Natural killer cell (primary cell): ENCODE measurements at regions of chr14 and their contacts with region 1.

Region 1: DNA sequence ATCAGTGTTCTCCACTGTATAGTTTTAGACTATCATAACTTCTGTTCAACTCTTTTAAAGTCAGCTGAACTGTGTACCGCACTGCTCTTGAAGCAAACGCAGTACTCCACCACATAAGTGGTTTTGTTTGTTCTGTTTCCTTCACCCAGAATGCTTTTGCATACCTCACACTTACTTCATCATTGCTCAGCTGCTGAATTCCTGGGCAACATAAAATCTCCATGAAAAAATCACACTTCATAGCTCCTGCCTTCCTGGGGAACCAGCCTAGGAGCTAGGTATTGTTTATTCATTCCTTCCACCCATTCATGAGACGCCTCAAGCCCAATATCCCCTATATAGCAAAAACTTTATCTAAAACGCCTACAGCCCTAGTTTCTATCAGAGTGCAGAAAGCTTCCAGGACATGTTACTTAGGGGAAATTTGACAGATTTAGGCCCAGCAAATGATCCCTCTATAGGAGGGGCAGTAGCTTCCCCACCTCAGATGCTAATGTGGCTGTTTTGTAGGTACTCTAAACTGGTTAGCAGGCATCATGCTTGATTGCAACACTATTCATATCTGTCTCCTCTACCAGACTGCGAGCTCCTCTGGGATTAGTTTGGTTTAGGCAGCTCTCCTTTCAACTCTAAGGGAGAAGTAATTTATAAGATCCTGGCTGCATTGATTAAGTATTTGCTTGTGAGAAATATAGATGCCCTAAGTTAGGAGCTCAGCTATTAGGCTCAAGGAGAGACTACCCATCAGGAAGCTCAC is 44.5 kb downstream of the LRRC9 start:
- DNase-seq: peak in 1 of 2 donors; percentile 29
- ATAC-seq: peak; percentile 3 to 17 (median 12)
- H3K4me3 ChIP-seq: peak overlapping the region; percentile 53
- H3K4me3 Mint-ChIP-seq: peak overlapping the region; percentile 93
- H3K27ac ChIP-seq: peak overlapping the region; percentile 75
- H3K27ac Mint-ChIP-seq: peak overlapping the region; percentile 91 to 92
- H3K4me1 ChIP-seq: peaks cover 4% of the 10 kb centered on the region
- H3K4me1 Mint-ChIP-seq: peaks cover 7 to 8% of the 10 kb centered on the region in 2 donors
- H3K27me3 ChIP-seq: no peaks in the 10 kb centered on the region
- H3K27me3 Mint-ChIP-seq: peaks cover 7 to 17% of the 10 kb centered on the region in 2 donors
- CTCF ChIP-seq: no peak

Region 2: DNA sequence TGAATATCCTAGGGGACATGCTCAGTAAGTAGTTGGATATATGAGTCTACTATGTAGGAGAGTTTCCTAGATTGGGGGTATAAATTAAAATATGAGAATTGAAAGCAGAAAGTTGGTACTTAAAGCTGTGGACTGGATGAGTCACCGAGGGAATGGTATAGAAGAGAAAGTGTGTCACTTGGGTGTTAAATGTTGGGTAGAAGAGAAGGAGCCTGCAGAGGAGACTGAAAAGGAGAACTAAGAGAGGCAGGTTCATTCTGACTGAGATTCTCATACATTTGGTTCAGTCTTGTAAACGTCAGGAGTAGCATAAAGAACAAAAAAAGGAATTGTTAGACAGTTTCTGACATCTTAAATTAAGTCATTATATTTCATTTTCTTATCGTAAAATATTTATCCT is 24.6 kb before region 1 on chr14:
- intact Hi-C with region 1: no loop called
- DNase-seq: no peak
- ATAC-seq: no peak
- H3K4me3 ChIP-seq: no peak overlapping the region
- H3K4me3 Mint-ChIP-seq: no peak overlapping the region
- H3K27ac ChIP-seq: no peak overlapping the region
- H3K27ac Mint-ChIP-seq: no peak overlapping the region
- H3K4me1 ChIP-seq: no peaks in the 10 kb centered on the region
- H3K4me1 Mint-ChIP-seq: no peaks in the 10 kb centered on the region
- H3K27me3 ChIP-seq: no peaks in the 10 kb centered on the region
- H3K27me3 Mint-ChIP-seq: peaks cover 13 to 19% of the 10 kb centered on the region in 2 donors
- CTCF ChIP-seq: no peak

Region 3: GRCh38 chr14:60064491-60065072 is 100.2 kb after region 1 on chr14:
- intact Hi-C with region 1: loop called (anchors 5 kb)
- DNase-seq: peak in 1 of 2 donors; percentile 65
- ATAC-seq: peak; percentile 70 to 88 (median 75)
- H3K4me3 ChIP-seq: no peak overlapping the region
- H3K4me3 Mint-ChIP-seq: no peak overlapping the region
- H3K27ac ChIP-seq: no peak overlapping the region
- H3K27ac Mint-ChIP-seq: no peak overlapping the region
- H3K4me1 ChIP-seq: no peaks in the 10 kb centered on the region
- H3K4me1 Mint-ChIP-seq: no peaks in the 10 kb centered on the region
- H3K27me3 ChIP-seq: no peaks in the 10 kb centered on the region
- H3K27me3 Mint-ChIP-seq: peaks cover 4 to 6% of the 10 kb centered on the region in 2 donors
- CTCF ChIP-seq: peak; percentile 80

Region 4: DNA sequence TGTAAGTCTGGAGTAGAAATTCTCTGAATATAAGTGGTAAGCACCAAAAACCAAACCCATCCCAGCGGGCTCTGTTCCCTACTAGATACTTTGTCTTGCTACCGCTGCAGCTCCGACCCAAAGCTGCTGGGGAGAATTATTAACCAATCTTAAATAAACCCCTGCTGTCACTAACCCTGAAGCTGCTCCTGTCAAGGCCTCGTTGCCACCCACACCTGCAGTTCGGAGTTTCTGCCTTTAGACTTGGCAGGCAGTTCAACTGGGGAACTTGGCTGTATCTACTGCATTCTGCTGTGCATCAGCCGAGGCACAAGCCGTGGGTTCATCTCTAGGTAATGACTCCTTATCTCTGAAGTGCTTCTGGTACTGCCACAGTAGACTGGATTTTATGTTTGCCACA is 340.1 kb after region 1 on chr14:
- intact Hi-C with region 1: no loop called
- DNase-seq: no peak
- ATAC-seq: no peak
- H3K4me3 ChIP-seq: no peak overlapping the region
- H3K4me3 Mint-ChIP-seq: no peak overlapping the region
- H3K27ac ChIP-seq: no peak overlapping the region
- H3K27ac Mint-ChIP-seq: no peak overlapping the region
- H3K4me1 ChIP-seq: no peaks in the 10 kb centered on the region
- H3K4me1 Mint-ChIP-seq: peaks cover 0 to 8% of the 10 kb centered on the region in 2 donors
- H3K27me3 ChIP-seq: no peaks in the 10 kb centered on the region
- H3K27me3 Mint-ChIP-seq: no peaks in the 10 kb centered on the region
- CTCF ChIP-seq: no peak